ENCODE measurements at regions of chr1 and their contacts with region 1.

Region 1: DNA sequence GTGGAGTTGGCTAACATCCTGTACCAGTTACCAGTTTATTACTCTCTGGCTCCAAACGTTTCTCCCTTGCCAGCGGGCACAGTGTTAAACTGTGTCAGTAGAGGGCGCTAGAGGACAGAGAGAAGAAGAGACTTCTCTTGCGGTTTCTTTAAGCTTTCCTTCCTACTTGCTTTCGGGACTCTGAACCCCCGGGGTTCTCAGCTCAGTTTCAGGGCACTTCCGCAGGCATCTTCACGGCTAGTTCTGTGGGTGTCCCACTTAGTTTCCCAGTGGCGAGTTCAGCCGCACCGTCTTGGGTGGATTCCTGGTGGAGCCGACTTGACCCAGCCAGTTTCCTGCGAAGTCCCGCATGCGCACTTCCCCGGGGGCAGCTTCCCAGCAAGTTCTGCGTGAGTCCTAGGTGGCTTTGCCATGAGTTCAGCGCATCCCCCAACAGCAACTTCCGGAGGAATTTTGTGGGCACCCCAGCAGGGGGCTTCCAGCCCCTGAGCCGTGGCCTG is 37.9 kb upstream of the BTG2 start:
- DNase-seq: peak; percentile 62
- H3K4me3 ChIP-seq: peak overlapping the region; percentile 56
- H3K27me3 ChIP-seq: peaks cover 2% of the 10 kb centered on the region; the same call in 1 of the 2 replicates
- CTCF ChIP-seq: peak; percentile 94

Region 2: GRCh38 chr1:202938287-202938925 is 329.0 kb before region 1 on chr1:
- CTCF ChIA-PET with region 1: no interaction called
- POLR2A ChIA-PET with region 1: no interaction called
- DNase-seq: no peak
- H3K4me3 ChIP-seq: no peak overlapping the region
- H3K27me3 ChIP-seq: no peaks in the 10 kb centered on the region
- CTCF ChIP-seq: no peak

Region 3: DNA sequence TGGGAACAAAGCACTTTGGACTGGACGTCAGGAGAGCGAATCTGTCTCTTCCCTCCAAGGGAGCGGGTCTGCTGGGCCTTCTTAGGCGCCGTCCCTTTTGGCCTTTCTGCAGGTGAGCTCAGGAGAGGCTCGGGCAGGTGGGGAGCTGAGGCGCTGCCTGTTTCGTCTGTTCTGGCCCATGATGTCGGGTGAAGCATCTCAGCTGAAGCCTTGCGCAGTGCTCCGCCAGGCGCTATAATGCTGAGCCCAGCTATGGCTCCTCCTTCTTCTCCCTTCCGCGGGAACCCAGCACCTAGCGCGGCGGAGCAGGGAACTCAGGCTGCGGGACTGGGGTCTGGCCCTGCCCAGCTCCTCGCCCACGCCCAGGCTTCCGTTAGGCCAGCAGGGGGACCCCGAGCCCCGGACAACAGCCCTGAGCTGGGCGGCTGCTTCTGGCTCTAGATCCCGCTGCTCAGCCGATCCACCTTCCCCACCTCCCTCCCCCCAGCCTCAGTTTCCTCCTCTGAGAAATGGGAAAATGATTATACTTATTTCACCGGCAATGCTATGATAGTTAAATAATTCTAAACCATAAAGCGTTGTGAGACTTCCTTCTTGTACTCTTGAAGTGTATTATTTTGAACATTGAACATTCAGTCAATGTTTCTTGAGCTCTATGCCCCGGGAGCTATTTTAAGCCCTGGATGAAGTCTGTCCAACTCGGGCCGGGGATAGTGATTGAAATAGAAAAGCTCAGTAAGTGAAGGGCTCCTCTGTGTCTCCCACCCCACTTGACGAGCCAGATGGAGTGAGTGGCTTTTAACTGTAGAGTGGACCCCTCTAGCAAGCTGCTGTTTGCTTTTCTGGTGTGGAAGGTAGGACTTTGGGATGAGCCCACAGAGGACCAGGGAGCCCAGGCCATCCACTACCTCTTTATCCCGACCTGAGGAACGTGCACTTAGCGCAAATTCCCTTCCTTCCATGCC is 149.5 kb before region 1 on chr1:
- CTCF ChIA-PET with region 1: interaction called, 20 read pairs
- POLR2A ChIA-PET with region 1: no interaction called
- DNase-seq: no peak
- H3K4me3 ChIP-seq: no peak overlapping the region
- H3K27me3 ChIP-seq: peaks cover 38% of the 10 kb centered on the region
- CTCF ChIP-seq: peak; percentile 88

Region 4: GRCh38 chr1:203216274-203217138 is 50.9 kb before region 1 on chr1:
- CTCF ChIA-PET with region 1: interaction called, 38 read pairs
- POLR2A ChIA-PET with region 1: no interaction called
- DNase-seq: no peak
- H3K4me3 ChIP-seq: no peak overlapping the region
- H3K27me3 ChIP-seq: peaks cover 8% of the 10 kb centered on the region; the same call in 1 of the 2 replicates
- CTCF ChIP-seq: peak; percentile 64

Region 5: DNA sequence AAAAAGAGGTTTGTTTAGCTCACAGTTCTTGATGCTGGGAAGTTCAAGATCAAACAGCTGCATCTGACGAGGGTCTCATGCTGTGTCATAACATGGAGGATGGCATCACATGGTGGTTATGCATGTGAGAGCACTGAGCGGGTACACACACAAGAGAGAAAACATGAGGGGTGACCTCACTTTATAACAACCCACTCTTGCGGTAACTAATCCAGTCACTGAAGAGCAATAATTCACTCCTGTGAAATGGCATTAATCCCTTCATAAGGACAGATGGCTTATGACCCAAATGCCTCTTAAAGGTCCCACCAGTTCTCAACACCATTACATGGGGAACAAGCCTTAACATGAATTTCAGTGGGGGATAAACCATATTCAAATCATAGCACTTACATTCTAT is 14.7 kb before region 1 on chr1:
- CTCF ChIA-PET with region 1: interaction called, 19 read pairs
- POLR2A ChIA-PET with region 1: interaction called, 5 read pairs
- DNase-seq: no peak
- H3K4me3 ChIP-seq: no peak overlapping the region
- H3K27me3 ChIP-seq: peaks cover 4% of the 10 kb centered on the region
- CTCF ChIP-seq: no peak

Region 6: GRCh38 chr1:203326830-203327683 is 59.7 kb after region 1 on chr1:
- CTCF ChIA-PET with region 1: interaction called, 484 read pairs
- POLR2A ChIA-PET with region 1: no interaction called
- DNase-seq: no peak
- H3K4me3 ChIP-seq: peak overlapping the region; percentile 49
- H3K27me3 ChIP-seq: peaks cover 32% of the 10 kb centered on the region
- CTCF ChIP-seq: no peak

Region 7: GRCh38 chr1:203486618-203487370 is 219.4 kb after region 1 on chr1:
- CTCF ChIA-PET with region 1: interaction called, 26 read pairs
- POLR2A ChIA-PET with region 1: interaction called, 3 read pairs
- DNase-seq: no peak
- H3K4me3 ChIP-seq: no peak overlapping the region
- H3K27me3 ChIP-seq: no peaks in the 10 kb centered on the region
- CTCF ChIP-seq: no peak

Region 8: DNA sequence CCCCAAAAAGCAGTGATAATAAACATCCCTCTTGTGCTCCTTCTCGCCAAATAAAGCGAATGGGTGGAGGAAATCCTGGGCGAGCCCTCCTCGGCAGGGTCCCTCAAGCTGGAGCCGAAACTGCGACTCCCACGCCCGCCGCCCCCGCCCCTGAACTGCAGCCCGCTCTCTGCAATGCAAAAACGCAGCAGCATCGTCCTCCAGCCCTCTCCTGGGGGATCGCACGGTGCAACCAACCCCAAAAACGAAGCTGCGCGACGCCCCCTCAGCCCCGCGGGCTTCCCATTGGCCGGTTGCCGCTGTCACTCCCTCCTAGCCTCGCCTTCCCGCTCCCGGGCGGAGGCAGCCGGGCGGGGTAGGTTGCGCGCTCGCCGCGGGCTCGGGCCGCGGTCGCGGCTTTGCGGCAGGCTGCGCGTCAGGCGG is 1960.2 kb after region 1 on chr1 and contains the start of gene TMCC2:
- CTCF ChIA-PET with region 1: no interaction called
- POLR2A ChIA-PET with region 1: no interaction called
- DNase-seq: no peak
- H3K4me3 ChIP-seq: peak within 1 kb of the TSS; percentile 71
- H3K27me3 ChIP-seq: peaks cover 2% of the 10 kb centered on the region
- CTCF ChIP-seq: 0 out of 2 replicates have a peak, but pooled peaks have one; percentile 8
- polyA plus RNA-seq, gene TMCC2: 2.4 and 3.4 TPM in 2 replicates

Measured in BJ (cell line).